Transverse colon (tissue), 4 donors: ENCODE measurements at regions of chr2 and their contacts with region 1.

Region 1: DNA sequence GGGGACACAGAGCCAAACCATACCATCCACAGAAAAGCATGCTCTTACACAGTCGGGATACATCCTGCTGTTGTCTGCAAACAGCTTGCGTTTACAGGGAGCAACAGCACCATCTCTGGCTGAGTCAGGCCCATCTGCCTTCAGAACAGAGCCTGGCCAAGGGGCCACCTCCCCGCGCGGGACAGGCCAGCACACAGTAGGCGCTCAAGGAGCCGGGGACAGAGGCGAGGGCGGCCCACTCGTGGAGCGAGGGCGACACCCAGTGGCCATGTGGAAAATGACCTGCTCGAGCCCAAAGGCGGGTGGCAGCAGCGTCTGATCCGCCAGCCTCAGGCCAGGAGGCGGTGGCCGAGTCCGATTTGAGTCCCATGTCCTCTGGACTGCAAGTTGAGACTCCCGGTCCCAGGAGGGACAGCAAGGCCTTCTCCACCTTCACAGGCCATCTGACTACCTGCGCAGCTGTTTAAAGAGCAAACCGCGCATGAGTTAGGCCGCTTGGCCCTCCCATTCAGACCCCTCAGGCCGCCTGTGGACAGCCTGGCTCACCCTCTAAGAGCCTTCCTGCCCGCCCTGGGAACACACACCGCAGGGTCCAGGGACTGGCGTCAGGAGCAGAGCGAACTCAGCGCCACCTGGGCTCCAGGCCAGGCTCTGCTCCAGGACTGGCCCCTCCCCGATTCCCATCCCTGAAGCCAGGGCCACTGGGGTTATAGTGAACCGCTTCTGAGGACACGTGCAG is 38.3 kb downstream of the TTC32 start:
- DNase-seq: peak; percentile 68
- H3K4me3 ChIP-seq: peak overlapping the region in 2 of 4 donors; percentile 7 to 8
- H3K27ac ChIP-seq: no peak overlapping the region
- H3K4me1 ChIP-seq: peaks cover 1 to 10% (median 3%) of the 10 kb centered on the region in 4 donors
- H3K27me3 ChIP-seq: peaks cover under 1% of the 10 kb centered on the region
- CTCF ChIP-seq: peak; percentile 95 to 97 (median 96)
- EP300 ChIP-seq: no peak
- POLR2A ChIP-seq: no peak

Region 2: DNA sequence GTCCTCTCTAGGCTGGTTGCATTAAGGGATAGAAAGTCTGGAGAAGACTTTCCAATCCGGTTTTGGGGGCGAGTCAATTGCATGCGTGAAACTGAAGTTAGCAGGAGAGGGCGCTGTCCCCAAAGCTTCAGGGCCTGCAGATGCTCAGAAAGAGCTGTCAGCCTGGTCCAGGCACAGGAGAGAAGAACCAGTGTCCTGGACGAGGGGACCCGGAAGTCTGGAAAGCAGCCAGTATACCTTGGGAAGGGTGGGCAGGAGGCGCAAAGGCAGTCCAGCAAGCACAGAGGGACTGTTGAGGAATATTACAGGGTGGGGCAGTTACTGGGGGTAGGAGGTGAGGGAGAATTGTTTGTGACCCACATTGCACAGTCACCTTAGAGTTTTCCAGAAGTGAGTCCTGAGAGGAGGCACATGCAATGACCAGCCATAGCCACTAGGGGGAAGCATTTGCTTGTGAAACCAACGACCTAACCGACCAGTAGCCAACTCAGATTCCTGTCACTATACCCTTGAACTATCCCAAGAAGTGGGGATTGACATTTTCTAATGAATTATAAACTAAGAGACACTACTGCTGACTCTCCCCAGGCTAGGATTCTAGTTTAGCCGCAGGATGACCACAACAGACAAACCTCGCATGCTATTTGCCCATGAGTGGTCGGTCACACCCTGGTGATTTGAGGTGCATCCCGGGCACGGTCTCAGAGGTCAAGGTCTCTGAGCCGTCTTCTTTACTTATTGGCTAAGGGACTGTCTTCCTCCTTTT is 1475.8 kb before region 1 on chr2:
- in situ Hi-C with region 1: loop called in 1 of 4 experiments (anchors 25 kb)
- intact Hi-C with region 1: no loop called
- DNase-seq: peak; percentile 78
- H3K4me3 ChIP-seq: no peak overlapping the region
- H3K27ac ChIP-seq: peak overlapping the region in 2 of 4 donors; percentile 12 to 69
- H3K4me1 ChIP-seq: no peaks in the 10 kb centered on the region
- H3K27me3 ChIP-seq: no peaks in the 10 kb centered on the region
- CTCF ChIP-seq: peak; percentile 87 to 97 (median 92)
- EP300 ChIP-seq: no peak
- POLR2A ChIP-seq: no peak

Region 3: DNA sequence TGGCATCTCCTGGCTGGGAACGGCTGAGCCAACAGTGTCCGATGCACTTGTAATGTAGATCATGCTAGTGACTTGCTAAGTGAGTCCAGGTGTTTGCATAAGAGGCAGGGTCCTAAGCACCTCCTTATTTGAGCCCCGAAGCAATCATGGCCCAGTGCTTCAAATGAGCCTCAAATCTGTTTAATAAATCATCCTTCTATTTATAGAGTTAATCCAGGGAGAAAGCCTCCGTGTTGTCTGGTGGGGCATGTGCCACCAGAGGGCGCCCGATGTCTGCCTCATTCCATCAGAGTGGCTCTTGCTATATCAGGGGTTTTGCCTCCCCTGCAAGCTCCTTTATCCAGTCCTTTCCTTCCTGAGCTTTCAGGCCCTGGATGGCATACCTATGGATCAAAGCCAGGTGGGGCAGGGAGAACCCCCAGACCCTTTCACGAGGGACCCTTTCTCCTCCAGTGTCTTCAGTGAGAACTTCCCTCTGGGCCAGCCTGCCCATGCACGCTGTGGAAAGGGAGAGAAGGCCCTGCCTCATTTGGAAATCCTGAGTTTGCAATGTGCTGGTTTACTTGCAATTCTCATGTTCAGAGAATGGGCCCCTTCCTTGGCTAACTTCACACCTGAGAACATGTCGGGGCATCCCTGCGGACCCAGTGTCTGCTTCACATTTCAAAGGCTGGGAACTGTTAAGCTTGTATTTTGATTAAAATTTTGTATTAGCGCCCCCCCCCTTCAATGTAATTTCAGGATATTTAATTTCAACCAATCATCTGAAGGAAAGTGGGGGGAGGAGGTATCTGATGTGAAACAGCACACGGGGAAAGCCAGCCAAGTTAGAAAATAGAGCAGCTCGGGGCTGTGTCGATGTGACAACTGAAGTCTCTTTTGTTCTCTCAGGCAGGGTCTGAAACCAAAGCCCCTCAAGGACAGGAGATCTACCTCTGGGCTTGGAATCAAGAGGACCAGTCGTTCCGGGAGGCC is 1342.7 kb before region 1 on chr2:
- in situ Hi-C with region 1: loop called (anchors 5 to 25 kb)
- intact Hi-C with region 1: loop called (anchors 2 kb)
- DNase-seq: peak; percentile 82
- H3K4me3 ChIP-seq: no peak overlapping the region
- H3K27ac ChIP-seq: peak overlapping the region; percentile 42 to 75 (median 56)
- H3K4me1 ChIP-seq: peaks cover 0 to 16% (median 1%) of the 10 kb centered on the region in 4 donors
- H3K27me3 ChIP-seq: no peaks in the 10 kb centered on the region
- CTCF ChIP-seq: peak; percentile 86 to 95 (median 89)
- EP300 ChIP-seq: no peak
- POLR2A ChIP-seq: no peak

Region 4: DNA sequence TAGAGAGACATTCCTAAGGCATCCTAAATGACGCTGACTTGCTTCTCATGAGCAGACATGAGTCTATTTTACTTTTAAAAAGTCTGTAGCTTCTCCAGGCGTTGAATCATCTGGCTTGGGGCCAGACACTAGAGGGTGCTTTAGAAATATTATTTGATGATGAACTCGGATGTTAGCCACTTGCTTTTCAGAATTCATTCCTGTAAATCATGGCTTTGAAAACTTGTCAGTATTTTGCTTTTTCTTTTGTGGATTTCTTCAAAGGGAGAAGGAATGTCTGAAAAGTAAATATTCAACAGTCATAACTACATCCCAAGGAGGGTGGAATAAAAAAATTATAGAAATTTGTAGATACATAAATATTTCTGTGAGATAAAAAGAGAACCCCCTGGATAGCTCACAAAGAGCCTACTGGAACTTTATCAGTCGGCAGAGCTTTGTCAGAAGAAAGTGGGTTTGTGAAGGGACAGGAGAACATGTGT is 875.8 kb before region 1 on chr2:
- in situ Hi-C with region 1: loop called in 1 of 4 experiments (anchors 25 kb)
- intact Hi-C with region 1: no loop called
- DNase-seq: peak; percentile 45
- H3K4me3 ChIP-seq: no peak overlapping the region
- H3K27ac ChIP-seq: peak overlapping the region in 2 of 4 donors; percentile 16 to 29
- H3K4me1 ChIP-seq: peaks cover 0 to 22% (median 6%) of the 10 kb centered on the region in 4 donors
- H3K27me3 ChIP-seq: no peaks in the 10 kb centered on the region
- CTCF ChIP-seq: no peak
- EP300 ChIP-seq: no peak
- POLR2A ChIP-seq: no peak

Region 5: DNA sequence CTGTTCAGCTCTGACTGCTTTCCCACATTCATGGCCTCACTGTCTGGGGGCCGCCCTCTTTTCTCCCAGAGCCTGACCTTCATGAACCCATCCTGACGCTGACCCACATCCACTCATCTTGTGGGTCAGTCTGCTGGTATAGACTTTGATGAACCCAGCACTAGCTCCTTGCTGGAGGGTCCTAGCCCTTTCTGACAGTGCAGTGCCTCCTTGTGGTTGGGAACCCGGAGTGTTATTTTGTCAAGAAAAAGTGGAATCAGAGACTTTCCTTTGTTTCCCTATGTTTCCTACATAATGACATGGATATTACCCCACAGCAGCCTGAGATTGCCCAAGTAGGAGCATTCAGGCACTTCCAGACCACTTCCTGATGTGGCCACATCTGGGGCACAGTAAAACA is 485.8 kb before region 1 on chr2:
- in situ Hi-C with region 1: loop called in 1 of 4 experiments (anchors 10 kb)
- intact Hi-C with region 1: no loop called
- DNase-seq: no peak
- H3K4me3 ChIP-seq: no peak overlapping the region
- H3K27ac ChIP-seq: no peak overlapping the region
- H3K4me1 ChIP-seq: no peaks in the 10 kb centered on the region
- H3K27me3 ChIP-seq: no peaks in the 10 kb centered on the region
- CTCF ChIP-seq: no peak
- EP300 ChIP-seq: no peak
- POLR2A ChIP-seq: no peak

Region 6: GRCh38 chr2:19916385-19916950 is 53.0 kb after region 1 on chr2:
- in situ Hi-C with region 1: no loop called
- intact Hi-C with region 1: no loop called
- DNase-seq: no peak
- H3K4me3 ChIP-seq: no peak overlapping the region
- H3K27ac ChIP-seq: no peak overlapping the region
- H3K4me1 ChIP-seq: no peaks in the 10 kb centered on the region
- H3K27me3 ChIP-seq: no peaks in the 10 kb centered on the region
- CTCF ChIP-seq: no peak
- EP300 ChIP-seq: no peak
- POLR2A ChIP-seq: no peak